ENCODE measurements at regions of chr2 and their contacts with region 1.

Region 1: DNA sequence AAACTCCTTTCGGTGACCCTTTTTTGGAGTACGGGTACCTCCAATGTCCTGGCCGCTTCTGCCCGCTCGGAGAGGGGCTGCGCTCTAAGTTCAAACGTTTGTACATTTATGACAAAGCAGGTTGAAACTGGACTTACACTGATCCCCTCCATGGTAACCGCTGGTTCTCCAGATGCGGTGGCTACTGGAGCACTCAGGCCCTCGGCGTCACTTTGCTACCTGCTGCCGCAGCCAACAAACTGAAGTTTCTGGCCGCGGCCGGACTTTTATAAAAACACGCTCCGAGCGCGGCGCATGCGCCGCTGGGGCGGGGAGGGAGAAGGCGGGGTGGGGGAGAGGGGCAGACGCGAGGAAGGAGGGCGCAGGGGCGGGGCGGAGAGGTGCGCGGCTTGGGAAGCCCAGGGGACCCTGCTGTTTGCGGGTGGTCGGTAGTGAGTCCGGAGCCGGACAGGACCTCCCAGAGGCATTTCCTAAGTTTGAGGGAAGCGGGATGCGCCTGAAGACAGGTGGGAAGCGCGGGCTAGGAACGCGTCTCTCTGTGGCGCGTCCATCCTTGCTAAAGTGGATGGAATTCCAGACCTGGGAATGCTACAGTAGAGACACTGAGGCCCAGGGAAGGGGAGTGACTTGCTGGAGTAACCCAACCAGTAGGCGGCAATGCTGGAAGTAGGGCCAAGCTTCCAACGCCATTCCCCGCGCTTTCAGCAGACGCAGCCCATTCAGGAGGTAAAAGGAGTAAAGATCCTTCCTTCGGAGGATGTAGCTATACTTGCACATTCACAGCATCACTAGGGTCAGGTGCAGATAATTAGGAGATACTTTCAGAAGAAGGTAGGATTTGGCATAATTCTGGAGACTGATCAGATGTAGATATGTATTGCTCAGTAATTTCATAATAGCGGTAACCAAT is at the start of gene CXCR4:
- DNase-seq: peak; percentile 90
- ATAC-seq: peak; percentile 51
- H3K4me3 Mint-ChIP-seq: peak within 1 kb of the TSS; percentile 96
- H3K27ac Mint-ChIP-seq: peak within 1 kb of the TSS; percentile 97
- H3K4me1 Mint-ChIP-seq: peaks cover 66% of the 10 kb centered on the region
- H3K27me3 Mint-ChIP-seq: no peaks in the 10 kb centered on the region
- CTCF ChIP-seq: no peak
- total RNA-seq, gene CXCR4: 200 and 213 TPM in 2 replicates

Region 2: DNA sequence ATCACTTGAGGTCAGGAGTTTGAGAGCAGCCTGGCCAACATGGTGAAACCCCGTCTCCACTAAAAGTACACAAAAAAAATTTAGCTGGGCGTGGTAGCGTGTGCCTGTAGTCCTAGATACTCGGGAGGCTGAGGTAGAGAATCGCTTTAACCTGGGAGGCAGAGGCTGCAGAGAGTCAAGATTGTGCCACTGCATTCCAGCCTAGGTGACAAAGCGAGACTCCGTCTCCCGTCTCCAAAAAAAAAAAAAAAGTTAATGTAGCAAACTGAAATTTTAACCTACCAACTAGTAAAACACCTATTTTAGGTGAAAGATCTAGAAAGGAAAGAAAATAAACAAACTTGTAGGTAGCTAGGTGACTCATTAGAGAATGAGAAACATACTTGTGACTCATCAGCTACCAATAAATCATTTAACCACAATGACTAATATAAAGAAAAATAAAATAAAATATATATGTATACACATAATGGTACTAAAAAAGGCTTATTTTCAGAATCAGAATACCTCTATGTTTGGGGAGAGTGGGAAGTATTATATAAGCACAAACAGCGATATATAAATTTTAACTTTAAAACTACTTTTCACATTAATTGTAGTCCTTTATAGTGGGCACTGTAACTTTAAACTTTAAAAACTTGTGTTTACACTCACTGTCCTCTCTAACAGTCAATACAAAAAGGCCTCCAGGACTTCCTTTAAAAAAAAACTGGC is 169.4 kb before region 1 on chr2:
- CTCF ChIA-PET with region 1: no interaction called
- POLR2A ChIA-PET with region 1: interaction called, 10 read pairs
- intact Hi-C with region 1: no loop called
- DNase-seq: no peak
- ATAC-seq: peak; percentile 54
- H3K4me3 Mint-ChIP-seq: no peak overlapping the region
- H3K27ac Mint-ChIP-seq: peak overlapping the region; percentile 75
- H3K4me1 Mint-ChIP-seq: peaks cover 50% of the 10 kb centered on the region
- H3K27me3 Mint-ChIP-seq: no peaks in the 10 kb centered on the region
- CTCF ChIP-seq: no peak

Region 3: DNA sequence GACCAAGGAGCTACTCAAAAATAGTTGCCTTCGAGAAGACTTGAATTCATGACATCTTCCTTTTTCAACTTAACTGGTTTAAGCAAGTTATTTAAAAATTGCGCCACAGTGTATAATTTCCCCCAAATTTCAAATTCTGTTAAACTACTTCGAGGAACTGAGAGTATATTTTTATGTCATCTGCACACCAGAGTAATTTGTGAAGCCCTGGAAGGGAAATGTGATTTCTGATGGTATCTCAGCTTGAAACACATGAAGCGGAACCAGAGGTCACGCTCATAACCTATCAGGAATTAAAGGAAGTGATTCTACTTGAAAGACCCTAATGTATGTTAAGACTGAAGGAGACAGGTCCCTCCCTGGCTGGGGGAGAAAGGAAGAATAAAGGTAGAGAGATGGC is 98.9 kb before region 1 on chr2:
- CTCF ChIA-PET with region 1: no interaction called
- POLR2A ChIA-PET with region 1: interaction called, 11 read pairs
- intact Hi-C with region 1: no loop called
- DNase-seq: no peak
- ATAC-seq: peak; percentile 89
- H3K4me3 Mint-ChIP-seq: peak overlapping the region; percentile 4
- H3K27ac Mint-ChIP-seq: peak overlapping the region; percentile 75
- H3K4me1 Mint-ChIP-seq: peaks cover 34% of the 10 kb centered on the region
- H3K27me3 Mint-ChIP-seq: no peaks in the 10 kb centered on the region
- CTCF ChIP-seq: no peak

Region 4: DNA sequence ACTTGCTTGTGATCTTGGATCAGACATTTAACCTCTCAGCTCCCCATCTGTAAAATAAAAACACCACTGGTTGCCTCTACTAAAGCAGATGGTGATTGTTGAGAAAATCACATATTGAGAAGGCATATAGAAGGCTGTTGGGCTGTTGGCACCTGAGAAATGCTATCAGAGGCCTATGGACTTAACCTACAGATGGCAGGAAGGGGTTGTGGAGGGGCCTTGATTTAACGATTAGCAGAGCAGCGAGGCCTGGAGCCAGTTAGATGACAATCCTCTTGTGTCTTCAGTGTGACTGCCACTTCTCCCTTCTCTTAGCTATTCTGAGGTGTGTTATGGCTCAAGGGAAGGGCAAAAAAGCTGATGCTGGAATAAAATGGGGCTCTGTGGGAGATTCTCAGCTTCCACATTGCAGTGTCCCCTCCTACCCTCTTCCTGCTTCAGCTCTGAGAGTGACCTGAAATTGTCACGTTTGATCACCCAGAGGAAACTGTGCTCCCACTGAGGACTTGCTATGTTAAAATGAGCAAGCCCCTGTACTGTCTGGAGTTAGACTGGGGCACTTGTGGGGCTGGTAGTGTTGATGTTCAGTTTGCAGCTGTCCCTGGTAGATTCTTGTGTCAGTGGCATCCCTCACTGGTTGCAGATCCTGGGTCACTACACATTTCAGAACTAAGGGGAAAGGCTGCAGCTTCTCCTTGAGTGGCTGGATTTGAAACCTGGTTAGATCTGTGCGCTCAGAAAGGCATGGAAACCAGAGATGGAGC is 31.7 kb before region 1 on chr2:
- CTCF ChIA-PET with region 1: no interaction called
- POLR2A ChIA-PET with region 1: no interaction called
- intact Hi-C with region 1: no loop called
- DNase-seq: no peak
- ATAC-seq: no peak
- H3K4me3 Mint-ChIP-seq: no peak overlapping the region
- H3K27ac Mint-ChIP-seq: no peak overlapping the region
- H3K4me1 Mint-ChIP-seq: peaks cover 7% of the 10 kb centered on the region
- H3K27me3 Mint-ChIP-seq: no peaks in the 10 kb centered on the region
- CTCF ChIP-seq: no peak

Region 5: DNA sequence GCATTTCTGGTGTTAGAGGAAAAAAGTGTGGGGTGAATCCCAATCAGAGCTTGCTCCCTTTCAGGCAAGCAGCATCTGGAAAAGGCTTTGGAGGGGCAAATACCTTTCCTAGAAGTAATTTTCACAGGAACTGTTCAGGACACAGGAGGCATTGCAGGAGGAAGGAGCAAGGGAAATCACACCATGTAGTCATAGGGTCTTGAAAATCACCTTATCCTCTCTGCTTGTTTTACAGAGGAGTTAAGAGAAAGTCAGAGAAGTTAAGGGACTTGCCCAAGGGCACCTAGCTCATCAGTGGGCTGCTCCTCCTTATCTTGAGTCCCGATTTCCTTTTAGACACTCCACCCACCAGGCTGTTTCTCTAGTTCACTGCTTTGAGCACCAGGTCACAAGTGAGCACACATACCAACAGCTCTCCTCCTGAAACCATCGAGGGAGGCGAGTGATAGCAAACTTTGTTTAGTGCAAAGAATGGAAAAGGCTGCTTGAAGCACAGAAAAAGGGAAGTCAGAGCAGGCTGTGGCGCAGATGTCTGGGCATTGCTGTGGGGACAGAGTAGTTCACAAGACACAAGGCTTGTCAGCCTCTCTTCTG is 89.0 kb after region 1 on chr2:
- CTCF ChIA-PET with region 1: interaction called, 9 read pairs
- POLR2A ChIA-PET with region 1: interaction called, 166 read pairs
- intact Hi-C with region 1: loop called (anchors 1 kb)
- DNase-seq: peak; percentile 57
- ATAC-seq: peak; percentile 66
- H3K4me3 Mint-ChIP-seq: peak overlapping the region; percentile 71
- H3K27ac Mint-ChIP-seq: peak overlapping the region; percentile 97
- H3K4me1 Mint-ChIP-seq: peaks cover 78% of the 10 kb centered on the region
- H3K27me3 Mint-ChIP-seq: no peaks in the 10 kb centered on the region
- CTCF ChIP-seq: no peak

Region 6: DNA sequence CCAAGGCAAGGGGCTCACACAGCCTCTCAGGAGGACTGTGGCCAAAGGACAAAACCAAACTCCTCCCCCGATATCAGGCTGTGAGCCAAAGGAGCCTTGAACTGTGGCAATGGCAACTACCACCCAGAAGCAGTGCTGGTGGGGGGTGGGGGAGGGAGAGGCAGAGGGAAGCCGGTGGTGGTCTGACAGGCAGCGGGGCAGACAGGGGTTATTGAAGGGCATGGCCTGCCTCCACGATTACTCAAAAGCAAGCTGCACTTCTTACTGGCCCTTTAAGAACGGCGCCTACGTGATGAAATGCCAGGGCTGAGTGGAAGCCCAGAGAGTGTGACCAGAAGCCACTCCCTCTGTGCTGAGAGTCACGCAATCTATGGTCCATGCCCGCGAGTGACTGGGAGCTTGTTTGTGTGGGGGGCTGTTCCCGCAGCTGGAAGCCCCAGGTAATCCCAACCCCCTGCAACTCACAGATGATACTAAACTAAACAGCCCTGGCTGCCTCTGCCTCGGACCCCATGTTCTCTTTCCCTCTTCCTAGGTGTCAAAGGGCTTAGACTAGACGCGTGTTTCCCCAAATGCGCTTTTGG is 128.0 kb after region 1 on chr2:
- CTCF ChIA-PET with region 1: no interaction called
- POLR2A ChIA-PET with region 1: interaction called, 86 read pairs
- intact Hi-C with region 1: no loop called
- DNase-seq: no peak
- ATAC-seq: peak; percentile 86
- H3K4me3 Mint-ChIP-seq: peak overlapping the region; percentile 35
- H3K27ac Mint-ChIP-seq: peak overlapping the region; percentile 76
- H3K4me1 Mint-ChIP-seq: peaks cover 65% of the 10 kb centered on the region
- H3K27me3 Mint-ChIP-seq: no peaks in the 10 kb centered on the region
- CTCF ChIP-seq: no peak

Region 7: DNA sequence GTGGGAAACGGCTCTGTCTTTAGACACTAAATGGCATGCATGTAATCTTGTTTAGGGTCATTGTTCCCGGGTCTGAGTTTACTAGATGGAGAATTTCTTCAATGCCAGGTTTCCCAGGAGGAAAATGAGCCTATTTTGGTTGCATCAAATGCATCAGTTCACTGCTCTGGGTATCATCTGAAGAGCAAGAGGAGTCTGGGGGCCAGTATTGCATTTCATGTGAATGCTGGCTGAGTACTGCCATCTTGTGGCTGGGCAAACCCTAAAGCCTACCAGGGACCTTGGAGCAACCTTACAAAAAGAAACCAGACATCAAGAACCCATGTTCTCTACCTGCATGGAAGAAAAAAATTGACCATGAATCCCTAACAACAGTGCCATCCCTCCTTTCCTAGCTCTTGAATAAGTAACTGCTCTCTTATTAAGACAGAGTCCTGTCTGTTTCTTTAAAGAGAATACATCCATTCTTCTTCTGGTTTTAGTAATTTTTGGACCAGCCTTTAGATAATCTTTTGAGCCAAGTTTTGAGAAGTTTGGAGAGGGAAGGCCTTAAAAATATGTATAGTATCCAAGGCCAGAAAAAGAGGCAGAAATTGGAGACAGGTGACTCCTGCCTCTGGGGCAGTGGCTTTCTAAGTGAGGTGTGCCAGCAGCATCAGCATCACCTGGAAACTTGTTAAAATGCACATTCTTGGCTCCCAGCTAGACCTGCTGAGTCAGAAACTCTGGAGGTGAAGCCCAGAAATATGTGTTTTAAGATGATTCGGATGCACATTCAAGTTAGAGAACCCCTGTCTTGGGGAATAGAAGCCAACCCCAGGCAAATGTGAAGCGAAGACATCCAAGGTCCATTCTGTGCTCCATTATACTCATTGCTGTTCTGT is 260.8 kb after region 1 on chr2:
- CTCF ChIA-PET with region 1: interaction called, 4 read pairs
- POLR2A ChIA-PET with region 1: interaction called, 35 read pairs
- intact Hi-C with region 1: loop called (anchors 1 kb)
- DNase-seq: no peak
- ATAC-seq: peak; percentile 40
- H3K4me3 Mint-ChIP-seq: no peak overlapping the region
- H3K27ac Mint-ChIP-seq: peak overlapping the region; percentile 92
- H3K4me1 Mint-ChIP-seq: peaks cover 81% of the 10 kb centered on the region
- H3K27me3 Mint-ChIP-seq: no peaks in the 10 kb centered on the region
- CTCF ChIP-seq: peak; percentile 44